Activated B cell treated with CpG ODN at 0.5 μM for 24 hours (primary cell): ENCODE measurements at regions of chr5 and their contacts with region 1.

Region 1: DNA sequence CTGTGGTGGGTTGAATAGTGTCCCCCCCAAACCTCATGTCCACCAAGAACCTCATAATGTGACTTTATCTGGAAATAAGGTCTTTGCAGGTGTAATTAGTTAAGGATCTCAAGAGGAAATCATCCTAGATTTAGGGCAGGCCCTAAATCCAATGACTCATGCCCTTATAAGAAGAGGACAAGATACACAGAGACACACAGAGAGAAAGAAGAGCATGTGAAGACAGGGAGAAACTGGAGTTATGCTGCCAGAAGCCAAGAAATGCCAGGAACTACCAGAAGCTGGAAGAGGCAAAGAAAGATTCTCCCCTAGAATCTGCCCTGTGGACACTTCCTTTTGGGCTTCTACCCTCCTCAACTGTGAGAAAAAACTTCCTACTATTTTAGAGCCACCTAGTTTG is 8.8 kb downstream of the FAM13B start:
- DNase-seq: no peak
- ATAC-seq: no peak
- H3K4me3 Mint-ChIP-seq: no peak overlapping the region
- H3K27ac Mint-ChIP-seq: no peak overlapping the region
- H3K4me1 Mint-ChIP-seq: peaks cover 78% of the 10 kb centered on the region
- H3K27me3 Mint-ChIP-seq: no peaks in the 10 kb centered on the region
- CTCF ChIP-seq: no peak

Region 2: GRCh38 chr5:137933491-137933911 is 90.6 kb before region 1 on chr5:
- CTCF ChIA-PET with region 1: no interaction called
- POLR2A ChIA-PET with region 1: interaction called, 18 read pairs
- intact Hi-C with region 1: no loop called
- DNase-seq: no peak
- ATAC-seq: no peak
- H3K4me3 Mint-ChIP-seq: no peak overlapping the region
- H3K27ac Mint-ChIP-seq: peak overlapping the region; percentile 6
- H3K4me1 Mint-ChIP-seq: peaks cover 18% of the 10 kb centered on the region
- H3K27me3 Mint-ChIP-seq: no peaks in the 10 kb centered on the region
- CTCF ChIP-seq: no peak

Region 3: DNA sequence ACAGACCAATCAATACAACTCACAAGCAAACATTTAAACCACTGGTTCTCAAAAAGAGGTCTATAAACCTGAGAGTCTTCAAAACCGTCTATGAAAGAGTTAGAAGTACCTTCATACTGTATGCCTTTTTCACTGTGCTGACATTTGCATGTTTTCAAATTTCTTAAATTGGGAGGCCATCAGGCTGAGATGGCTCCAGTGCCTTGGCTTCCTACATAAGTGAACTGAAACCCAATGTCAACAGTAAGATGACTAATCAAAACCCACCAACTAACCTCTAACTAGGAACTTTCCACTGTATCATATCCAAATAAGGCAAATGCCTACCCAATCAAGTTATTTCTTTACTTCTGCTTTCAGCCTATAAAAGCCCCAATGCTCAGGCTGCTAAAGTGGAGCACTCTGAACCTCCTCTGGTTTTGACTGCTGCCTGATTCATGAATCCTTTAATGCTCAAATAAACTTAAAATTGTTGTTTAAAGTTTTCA is 26.3 kb before region 1 on chr5:
- CTCF ChIA-PET with region 1: no interaction called
- POLR2A ChIA-PET with region 1: interaction called, 3 read pairs
- intact Hi-C with region 1: loop called (anchors 2 kb)
- DNase-seq: no peak
- ATAC-seq: peak; percentile 84
- H3K4me3 Mint-ChIP-seq: peak overlapping the region; percentile 32
- H3K27ac Mint-ChIP-seq: peak overlapping the region; percentile 78
- H3K4me1 Mint-ChIP-seq: peaks cover 45% of the 10 kb centered on the region
- H3K27me3 Mint-ChIP-seq: no peaks in the 10 kb centered on the region
- CTCF ChIP-seq: no peak

Region 4: DNA sequence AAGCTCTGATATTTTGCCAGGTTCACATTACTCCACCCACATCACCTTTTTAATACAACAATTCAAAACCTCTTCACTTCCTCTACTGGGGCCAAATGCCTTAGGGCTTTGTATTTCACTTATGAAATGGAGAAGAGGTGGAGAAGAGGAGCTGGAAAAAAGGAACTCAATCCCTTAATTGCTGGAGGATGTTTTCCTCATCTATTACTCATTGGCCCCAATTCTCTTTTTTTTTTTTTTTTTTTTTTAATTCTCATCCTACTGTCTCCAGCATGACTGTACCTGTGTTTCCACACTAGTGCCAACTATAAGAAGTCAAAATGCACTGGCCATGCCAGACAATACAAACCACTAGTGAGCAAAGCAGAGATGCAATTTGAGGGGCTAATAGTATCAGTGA is 12.1 kb before region 1 on chr5:
- CTCF ChIA-PET with region 1: interaction called, 3 read pairs
- POLR2A ChIA-PET with region 1: interaction called, 5 read pairs
- intact Hi-C with region 1: loop called (anchors 2 kb)
- DNase-seq: no peak
- ATAC-seq: no peak
- H3K4me3 Mint-ChIP-seq: no peak overlapping the region
- H3K27ac Mint-ChIP-seq: no peak overlapping the region
- H3K4me1 Mint-ChIP-seq: no peaks in the 10 kb centered on the region
- H3K27me3 Mint-ChIP-seq: no peaks in the 10 kb centered on the region
- CTCF ChIP-seq: no peak

Region 5: GRCh38 chr5:138138949-138139780 is 115.0 kb after region 1 on chr5 and contains the start of gene NME5:
- CTCF ChIA-PET with region 1: no interaction called
- POLR2A ChIA-PET with region 1: no interaction called
- intact Hi-C with region 1: no loop called
- DNase-seq: no peak
- ATAC-seq: peak; percentile 49
- H3K4me3 Mint-ChIP-seq: peak within 1 kb of the TSS; percentile 56
- H3K27ac Mint-ChIP-seq: no peak within 1 kb of the TSS
- H3K4me1 Mint-ChIP-seq: peaks cover 8% of the 10 kb centered on the region
- H3K27me3 Mint-ChIP-seq: peaks cover 8% of the 10 kb centered on the region
- CTCF ChIP-seq: no peak
- total RNA-seq, gene NME5: not detected in 2 replicates

Region 6: DNA sequence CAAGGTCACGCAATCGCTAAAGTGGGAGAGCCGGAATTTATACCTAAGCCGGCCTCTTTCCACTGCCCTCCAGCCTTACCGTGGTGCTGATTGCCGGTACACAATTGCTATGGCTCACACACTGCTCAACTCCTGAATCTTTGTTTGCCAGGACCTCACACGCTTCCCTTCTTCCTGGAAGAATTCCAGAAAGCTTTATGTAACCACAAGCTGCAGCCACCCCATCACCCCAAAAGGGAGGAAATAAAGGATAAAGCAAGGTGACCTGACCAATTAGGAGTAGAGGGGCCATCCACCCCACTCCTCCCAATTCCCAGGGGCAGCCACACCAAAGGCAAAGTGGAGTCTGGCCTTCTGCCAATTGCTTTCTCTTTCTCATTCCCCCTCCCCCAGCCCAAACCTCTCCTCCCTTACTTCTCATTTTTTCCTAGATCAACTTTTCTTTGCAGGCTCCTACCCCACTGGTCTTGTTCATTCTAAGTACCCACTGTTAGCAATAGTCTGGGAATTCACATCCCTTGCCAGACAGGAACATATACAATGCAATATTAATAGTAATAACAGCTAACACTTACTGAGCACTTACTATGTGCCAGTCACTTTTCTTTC is 207.0 kb after region 1 on chr5:
- CTCF ChIA-PET with region 1: no interaction called
- POLR2A ChIA-PET with region 1: no interaction called
- intact Hi-C with region 1: no loop called
- DNase-seq: no peak
- ATAC-seq: no peak
- H3K4me3 Mint-ChIP-seq: no peak overlapping the region
- H3K27ac Mint-ChIP-seq: no peak overlapping the region
- H3K4me1 Mint-ChIP-seq: no peaks in the 10 kb centered on the region
- H3K27me3 Mint-ChIP-seq: peaks cover 20% of the 10 kb centered on the region
- CTCF ChIP-seq: no peak